Activated CD4-positive, alpha-beta T cell treated with anti-CD3 and anti-CD28 coated beads for 36 hours (primary cell): ENCODE measurements at regions of chr14 and their contacts with region 1.

Region 1: DNA sequence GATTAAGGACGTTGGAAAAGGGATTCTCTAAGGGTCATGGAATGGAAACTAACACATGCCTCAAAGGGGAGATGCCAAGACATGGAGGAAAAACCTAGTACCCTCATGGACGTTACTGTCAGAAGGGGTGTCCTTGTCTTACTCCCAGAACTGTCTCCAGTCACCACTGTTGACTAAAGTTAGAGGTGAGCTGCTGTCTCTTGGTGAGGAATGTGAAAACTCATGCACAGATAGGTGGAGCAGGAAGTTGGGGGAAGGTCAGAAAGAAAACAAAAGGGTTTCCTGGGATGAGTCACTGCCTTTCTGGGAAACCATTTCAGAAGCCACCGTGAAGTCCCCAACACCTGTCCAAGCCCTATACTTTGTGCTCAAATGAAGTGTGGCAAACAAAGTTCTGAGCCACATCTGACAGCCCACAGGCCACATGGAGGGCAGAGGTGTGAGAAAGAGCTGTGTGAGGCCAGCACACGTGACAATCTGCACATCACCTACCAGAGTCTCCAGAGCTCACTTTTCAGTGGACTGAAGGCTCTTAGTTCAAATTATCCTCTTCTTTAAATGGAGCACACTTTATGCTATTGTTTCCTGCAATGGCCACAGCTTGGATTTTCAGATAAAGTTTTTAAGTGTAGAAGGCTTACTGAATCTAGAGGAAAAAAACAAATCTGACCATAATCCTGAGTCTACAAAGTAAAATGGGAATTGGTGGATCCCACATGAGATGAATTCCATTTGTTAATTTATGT is 92.9 kb upstream of the EGLN3 start:
- DNase-seq: peak; percentile 91
- ATAC-seq: peak; percentile 94
- H3K4me3 Mint-ChIP-seq: no peak overlapping the region
- H3K27ac Mint-ChIP-seq: peak overlapping the region; percentile 87
- H3K4me1 Mint-ChIP-seq: peaks cover 42% of the 10 kb centered on the region
- H3K27me3 Mint-ChIP-seq: peaks cover 1% of the 10 kb centered on the region

Region 2: DNA sequence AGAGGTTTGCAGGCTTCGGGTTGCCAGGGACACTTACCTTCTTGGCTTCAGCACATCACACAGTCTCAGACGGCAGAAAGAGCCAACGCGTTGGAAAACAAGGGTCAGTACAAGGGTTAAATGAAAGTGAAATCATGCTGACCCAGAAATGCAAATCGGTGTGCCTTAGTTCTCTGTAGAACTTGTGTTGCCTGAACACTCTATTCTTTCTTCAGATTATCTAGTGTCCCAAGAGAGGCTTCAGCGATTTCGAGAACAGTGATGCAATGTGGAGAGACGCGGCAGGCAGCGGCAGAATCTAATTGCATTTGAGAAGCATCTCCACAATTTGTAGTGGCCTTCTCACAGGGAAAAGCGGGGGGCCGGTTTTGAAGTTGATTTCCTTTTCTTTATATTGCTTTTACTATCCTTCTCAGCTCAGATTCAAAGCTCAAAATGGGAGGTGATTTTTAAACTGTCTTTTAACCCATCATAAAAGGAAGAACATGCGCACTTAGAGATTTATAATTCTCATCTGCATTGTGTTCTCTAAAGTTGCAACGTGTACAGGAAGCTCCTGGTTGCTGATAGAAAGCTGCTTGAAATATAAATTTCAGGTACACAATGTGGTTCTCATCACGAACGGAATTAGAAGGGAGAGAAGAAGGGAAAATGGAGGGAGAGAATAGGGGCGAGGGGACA is 25.1 kb before region 1 on chr14:
- CTCF ChIA-PET with region 1: no interaction called
- POLR2A ChIA-PET with region 1: no interaction called
- intact Hi-C with region 1: loop called (anchors 1 to 2 kb)
- DNase-seq: peak; percentile 22
- ATAC-seq: peak; percentile 59
- H3K4me3 Mint-ChIP-seq: peak overlapping the region; percentile 67
- H3K27ac Mint-ChIP-seq: peak overlapping the region; percentile 83
- H3K4me1 Mint-ChIP-seq: peaks cover 14% of the 10 kb centered on the region
- H3K27me3 Mint-ChIP-seq: no peaks in the 10 kb centered on the region

Region 3: GRCh38 chr14:34059855-34060638 is 16.2 kb after region 1 on chr14:
- CTCF ChIA-PET with region 1: interaction called, 3 read pairs
- POLR2A ChIA-PET with region 1: interaction called, 6 read pairs
- intact Hi-C with region 1: loop called in 1 of 2 experiments (anchors 1 kb)
- DNase-seq: peak; percentile 83
- ATAC-seq: peak; percentile 94
- H3K4me3 Mint-ChIP-seq: peak overlapping the region; percentile 76
- H3K27ac Mint-ChIP-seq: peak overlapping the region; percentile 89
- H3K4me1 Mint-ChIP-seq: peaks cover 12% of the 10 kb centered on the region
- H3K27me3 Mint-ChIP-seq: peaks cover 19% of the 10 kb centered on the region

Region 4: DNA sequence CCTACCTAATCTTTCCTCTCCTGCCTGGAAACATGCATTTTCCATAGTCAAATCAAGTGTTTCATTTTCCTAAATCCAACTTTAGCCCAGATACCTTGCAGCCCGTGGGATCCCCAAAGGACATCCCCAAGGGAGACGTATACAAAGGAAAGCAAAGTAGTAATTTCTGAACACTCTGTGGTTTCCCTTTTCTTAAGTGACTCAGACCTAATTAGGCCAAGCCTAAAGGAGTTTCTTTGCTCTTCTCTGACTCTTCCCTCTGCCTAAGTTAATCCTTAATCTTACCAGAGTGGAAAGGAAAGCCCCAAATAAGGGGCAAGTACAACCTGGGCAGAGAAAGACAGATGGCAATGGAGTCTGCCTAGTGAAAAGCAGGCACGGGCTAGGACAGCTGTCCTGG is 167.9 kb after region 1 on chr14:
- CTCF ChIA-PET with region 1: no interaction called
- POLR2A ChIA-PET with region 1: no interaction called
- intact Hi-C with region 1: loop called in 1 of 2 experiments (anchors 5 kb)
- DNase-seq: peak; percentile 16
- ATAC-seq: peak; percentile 81
- H3K4me3 Mint-ChIP-seq: peak overlapping the region; percentile 19
- H3K27ac Mint-ChIP-seq: peak overlapping the region; percentile 45
- H3K4me1 Mint-ChIP-seq: peaks cover 19% of the 10 kb centered on the region
- H3K27me3 Mint-ChIP-seq: peaks cover 26% of the 10 kb centered on the region

Region 5: DNA sequence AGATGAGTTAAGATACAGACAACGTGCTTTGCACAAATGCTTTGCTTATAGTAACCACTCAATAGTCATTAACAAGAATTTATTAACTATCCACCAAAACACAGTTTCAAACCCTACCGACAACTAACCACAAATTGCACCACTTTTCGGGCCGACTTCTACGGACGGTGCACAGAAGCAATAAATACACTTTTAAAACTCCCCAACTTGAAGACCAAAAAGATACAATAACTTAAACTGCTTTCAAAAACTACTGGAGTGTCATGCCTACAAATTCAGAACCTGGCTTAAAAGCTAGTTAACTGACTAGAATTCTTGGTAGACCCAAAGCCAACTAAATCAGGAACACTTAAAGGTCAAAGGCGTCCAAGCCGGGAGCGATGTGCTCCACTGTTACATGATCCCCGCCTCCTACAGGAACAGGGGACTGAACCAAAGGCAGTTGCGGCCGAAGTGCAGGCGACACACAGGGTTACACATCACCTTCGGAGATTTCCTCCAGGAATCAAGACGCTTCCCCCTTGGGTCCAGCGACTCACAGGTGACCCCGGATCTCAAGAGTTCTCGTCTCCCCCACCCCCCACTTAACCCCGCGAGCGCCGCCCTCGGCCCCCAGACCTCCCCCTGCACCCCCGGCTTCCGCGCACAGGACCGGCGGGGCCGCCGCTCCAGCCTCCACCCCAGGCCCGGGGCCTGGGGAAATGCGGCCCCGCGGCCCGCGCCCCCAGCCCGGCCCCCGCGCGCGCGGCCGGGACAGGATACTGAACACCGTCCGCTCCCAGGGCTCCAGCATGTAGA is 417.7 kb after region 1 on chr14:
- CTCF ChIA-PET with region 1: no interaction called
- POLR2A ChIA-PET with region 1: no interaction called
- intact Hi-C with region 1: loop called in 1 of 2 experiments (anchors 10 kb)
- DNase-seq: peak; percentile 50
- ATAC-seq: peak; percentile 62
- H3K4me3 Mint-ChIP-seq: peak overlapping the region; percentile 91
- H3K27ac Mint-ChIP-seq: peak overlapping the region; percentile 85
- H3K4me1 Mint-ChIP-seq: peaks cover 19% of the 10 kb centered on the region
- H3K27me3 Mint-ChIP-seq: no peaks in the 10 kb centered on the region